Left cardiac atrium (tissue), 4 donors: ENCODE measurements at regions of chr17 and their contacts with region 1.

Region 1: GRCh38 chr17:66255112-66255511 is 25.9 kb upstream of the APOH start:
- DNase-seq: no peak
- ATAC-seq: peak; percentile 79 to 82

Region 2: DNA sequence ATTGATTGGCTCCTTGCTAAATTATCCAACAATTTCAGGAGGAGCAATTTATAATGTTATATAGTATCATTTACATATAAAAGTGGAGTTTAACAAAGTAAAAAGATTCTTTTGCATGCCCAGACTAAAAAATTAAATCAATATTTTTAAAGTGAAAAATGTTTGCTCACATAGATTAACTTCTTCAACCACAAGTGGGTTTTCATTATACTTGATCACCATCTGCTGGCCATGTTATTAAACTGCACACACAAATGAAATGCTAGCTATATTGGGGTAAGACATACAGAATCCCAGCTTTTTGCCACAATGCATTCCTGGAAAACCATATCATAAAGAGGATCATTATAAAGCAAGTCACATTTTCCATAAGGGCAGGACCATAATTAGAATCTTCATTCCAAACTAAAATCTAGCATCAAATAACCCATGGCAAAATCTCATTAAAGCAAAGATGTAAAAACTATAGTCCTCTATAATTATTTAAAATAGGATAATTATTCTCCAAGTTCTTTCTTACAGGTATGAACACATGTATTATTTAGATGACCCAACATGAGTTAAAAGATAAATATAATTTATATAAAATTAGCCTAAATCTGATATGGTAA is 89.5 kb before region 1 on chr17:
- intact Hi-C with region 1: no loop called
- DNase-seq: no peak
- ATAC-seq: no peak

Region 3: GRCh38 chr17:66567234-66568170 is 312.4 kb after region 1 on chr17:
- intact Hi-C with region 1: loop called in 1 of 2 experiments (anchors 10 kb)
- DNase-seq: peak; percentile 81
- ATAC-seq: peak; percentile 80 to 87

Region 4: GRCh38 chr17:66625311-66625775 is 370.2 kb after region 1 on chr17:
- intact Hi-C with region 1: loop called (anchors 5 to 10 kb)
- DNase-seq: no peak
- ATAC-seq: peak in 1 of 2 donors; percentile 44

Region 5: GRCh38 chr17:66673668-66674315 is 418.7 kb after region 1 on chr17:
- intact Hi-C with region 1: loop called in 1 of 2 experiments (anchors 2 kb)
- DNase-seq: peak; percentile 30
- ATAC-seq: peak; percentile 69 to 84